ENCODE measurements at regions of chr19 and their contacts with region 1.

Region 1: DNA sequence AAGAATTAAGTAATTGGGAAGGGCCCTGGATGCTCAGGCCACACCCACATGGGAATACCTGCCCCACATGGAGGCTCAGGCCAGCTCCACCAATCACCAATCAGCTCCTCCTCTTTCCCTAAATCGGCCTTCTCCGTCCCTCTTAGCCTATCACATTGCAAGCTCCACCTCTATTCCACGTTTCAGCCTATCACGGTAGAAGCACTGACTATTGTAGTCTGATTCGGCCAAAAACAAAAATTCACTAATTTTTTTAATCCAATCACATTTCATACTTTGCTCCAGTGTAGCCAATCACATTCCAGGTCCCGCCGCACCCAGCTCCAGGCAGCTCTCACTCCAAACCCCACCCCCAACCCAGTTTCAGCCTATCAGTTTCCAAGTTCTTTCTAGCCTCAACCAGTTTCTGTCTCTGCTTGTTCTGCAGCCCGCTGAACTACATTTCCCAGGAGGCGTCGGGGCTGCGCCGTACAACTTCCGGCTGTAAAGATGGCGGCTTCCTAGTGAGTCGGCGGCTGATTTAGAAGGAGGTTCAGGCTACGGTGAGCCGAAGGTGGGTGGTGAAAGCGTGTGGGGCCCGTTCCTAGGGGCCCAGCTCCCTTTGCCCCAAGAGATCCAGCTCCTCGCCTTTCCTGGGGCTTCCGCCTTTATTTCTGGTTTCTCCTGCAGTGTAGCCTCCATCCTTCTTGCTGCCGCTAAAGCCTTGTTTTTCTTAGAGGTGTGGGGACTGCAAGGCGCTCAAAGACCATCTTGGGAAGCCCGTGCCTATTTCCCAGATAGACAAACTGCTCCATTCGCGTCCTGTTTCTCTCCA is at the start of gene BABAM1:
- DNase-seq: peak; percentile 92 to 99 (median 96)

Region 2: GRCh38 chr19:17156927-17157302 is 110.3 kb before region 1 on chr19:
- intact Hi-C with region 1: no loop called
- DNase-seq: peak in 1 of 10 donors; percentile 63

Region 3: DNA sequence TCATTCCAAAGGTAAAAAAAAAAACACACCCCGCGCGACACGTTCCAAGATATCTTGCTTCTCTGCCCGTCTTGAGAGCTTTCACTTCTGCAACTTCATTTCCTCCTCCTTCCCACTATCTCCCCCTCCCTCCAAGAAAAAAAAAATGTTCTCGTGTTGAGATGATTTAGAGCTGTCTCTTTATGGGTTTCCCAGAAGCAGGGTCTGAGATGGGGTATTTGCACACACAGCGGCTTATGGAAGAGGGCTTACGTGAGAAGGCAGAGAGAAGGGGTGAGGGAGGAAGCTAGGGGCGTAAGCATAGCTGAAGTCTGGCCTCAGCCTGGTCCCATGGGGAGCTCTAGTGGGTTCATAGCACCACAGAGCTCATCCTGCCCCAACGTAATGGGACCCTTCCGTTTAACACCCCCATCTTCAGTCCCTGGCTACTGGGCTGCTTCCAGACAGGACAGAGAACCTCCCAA is 83.3 kb before region 1 on chr19:
- intact Hi-C with region 1: no loop called
- DNase-seq: no peak

Region 4: GRCh38 chr19:17215125-17215971 is 51.8 kb before region 1 on chr19 and contains the start of gene USE1:
- intact Hi-C with region 1: loop called (anchors 10 kb)
- DNase-seq: peak; percentile 82 to 98 (median 88)

Region 5: DNA sequence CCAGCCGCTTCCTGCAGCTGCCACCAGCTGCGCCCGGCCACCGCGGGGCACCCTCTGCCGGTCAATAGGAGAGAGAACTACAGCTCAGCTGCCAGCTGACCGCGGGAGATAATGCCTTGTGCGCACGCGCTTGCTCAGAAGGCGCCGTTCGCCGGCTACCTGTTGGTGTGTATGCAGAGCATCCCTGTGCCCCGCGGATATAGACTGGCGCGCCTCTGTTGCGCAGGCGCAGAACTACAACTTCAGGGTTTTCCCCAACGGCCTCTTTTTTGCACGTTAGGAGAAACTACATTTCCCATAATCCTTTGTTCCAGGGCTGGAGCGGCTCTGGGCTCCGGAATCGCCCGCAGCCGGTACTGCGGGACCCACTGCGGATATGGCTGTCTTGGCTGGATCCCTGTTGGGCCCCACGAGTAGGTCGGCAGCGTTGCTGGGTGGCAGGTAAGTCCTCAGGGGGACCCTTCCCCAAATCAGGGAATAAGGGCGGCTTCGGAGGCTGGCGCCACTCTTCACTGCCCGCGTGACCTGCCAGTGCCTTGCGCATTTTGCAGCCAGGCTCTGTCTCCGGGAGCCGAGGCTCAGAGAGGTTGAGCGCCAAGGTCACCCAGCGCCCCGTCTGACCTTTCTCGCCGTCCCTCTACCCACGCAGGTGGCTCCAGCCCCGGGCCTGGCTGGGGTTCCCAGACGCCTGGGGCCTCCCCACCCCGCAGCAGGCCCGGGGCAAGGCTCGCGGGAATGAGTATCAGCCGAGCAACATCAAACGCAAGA is 38.5 kb after region 1 on chr19 and contains the start of gene MRPL34:
- intact Hi-C with region 1: loop called (anchors 5 kb)
- DNase-seq: peak; percentile 93 to 100 (median 96)